Right lobe of liver (tissue), 6 donors: ENCODE measurements at regions of chr5 and their contacts with region 1.

Region 1: DNA sequence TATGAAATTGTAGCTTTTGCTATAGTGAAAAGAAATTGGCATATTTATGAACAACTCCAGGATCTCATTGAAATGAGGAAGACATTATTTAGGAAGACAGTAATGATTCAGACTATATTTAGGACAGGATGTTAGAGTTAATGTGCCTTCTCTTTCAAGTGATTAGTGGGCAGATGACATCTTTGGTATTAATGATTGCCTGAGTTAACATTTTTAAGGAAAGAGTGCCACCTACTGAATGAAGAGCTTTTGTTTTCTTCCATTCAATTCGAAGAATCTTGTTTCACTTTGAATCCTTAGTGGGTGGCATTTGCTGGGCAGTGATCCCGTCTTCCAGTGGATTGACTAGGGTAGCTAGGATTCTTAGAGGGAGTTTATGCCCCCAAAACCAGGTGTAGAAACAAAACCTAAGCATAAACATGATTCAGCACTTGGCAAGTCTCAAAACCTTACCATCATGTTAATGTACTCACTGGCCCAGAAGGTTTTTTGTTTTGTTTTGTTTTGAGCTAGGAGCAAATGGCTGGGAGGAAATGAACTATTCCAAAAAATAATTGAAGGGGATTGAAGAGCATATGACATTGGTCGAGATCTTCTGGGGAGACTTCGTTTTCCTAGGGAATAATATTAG is 23.2 kb downstream of the MAP3K1 start:
- DNase-seq: no peak
- ATAC-seq: peak; percentile 81 to 91 (median 85)
- H3K4me3 ChIP-seq: no peak overlapping the region
- H3K27ac ChIP-seq: peak overlapping the region in 1 of 3 donors; percentile 8
- H3K4me1 ChIP-seq: peaks cover 0 to 8% (median 0%) of the 10 kb centered on the region in 4 donors
- H3K27me3 ChIP-seq: no peaks in the 10 kb centered on the region
- CTCF ChIP-seq: peak; percentile 55 to 63 (median 60)
- POLR2A ChIP-seq: no peak

Region 2: DNA sequence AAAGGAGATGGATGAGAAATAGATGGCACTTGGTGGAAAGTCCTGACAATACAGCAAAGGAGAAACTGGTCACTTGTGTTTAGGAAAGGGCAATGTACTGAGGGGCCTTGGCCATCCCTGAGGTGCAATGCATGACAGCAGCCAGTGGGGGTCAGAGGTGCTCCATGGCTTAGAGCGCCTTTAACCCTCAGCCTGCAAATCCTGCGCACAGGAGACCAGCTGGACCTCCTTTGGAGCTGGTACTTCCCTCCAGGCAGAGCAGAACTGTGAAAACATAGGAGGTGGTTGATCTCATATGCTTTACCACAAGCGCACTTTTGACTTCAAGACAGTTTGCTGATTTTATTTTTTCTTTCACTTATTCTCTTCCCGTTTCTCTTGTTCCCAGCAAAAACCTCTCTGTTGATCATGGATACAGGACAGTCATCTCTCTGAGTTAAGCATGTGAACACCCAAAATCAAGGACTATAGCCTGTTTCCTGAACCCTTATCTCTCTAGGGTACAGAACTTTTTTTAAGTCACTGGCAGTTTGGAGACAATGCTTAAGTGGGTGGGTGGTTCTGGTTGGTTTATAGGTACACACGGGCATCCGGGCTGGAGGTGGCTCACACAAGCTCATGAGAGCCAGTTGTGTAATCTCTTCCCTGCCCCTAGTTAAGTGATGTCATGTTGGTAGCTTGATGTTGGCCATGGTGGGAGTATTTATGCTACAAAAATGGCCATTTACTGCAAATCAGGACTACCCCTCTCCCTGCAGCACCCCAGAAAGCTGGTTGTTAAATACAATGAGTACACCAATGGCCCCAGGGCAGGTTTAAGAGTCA is 567.7 kb before region 1 on chr5:
- intact Hi-C with region 1: loop called (anchors 10 kb)
- DNase-seq: peak; percentile 79 to 82 (median 80)
- ATAC-seq: peak; percentile 99 to 100 (median 100)
- H3K4me3 ChIP-seq: no peak overlapping the region
- H3K27ac ChIP-seq: no peak overlapping the region
- H3K4me1 ChIP-seq: no peaks in the 10 kb centered on the region
- H3K27me3 ChIP-seq: no peaks in the 10 kb centered on the region
- CTCF ChIP-seq: peak; percentile 97 to 99 (median 98)
- POLR2A ChIP-seq: no peak

Region 3: GRCh38 chr5:56893251-56893951 is 54.9 kb after region 1 on chr5:
- intact Hi-C with region 1: no loop called
- DNase-seq: no peak
- ATAC-seq: no peak
- H3K4me3 ChIP-seq: no peak overlapping the region
- H3K27ac ChIP-seq: no peak overlapping the region
- H3K4me1 ChIP-seq: no peaks in the 10 kb centered on the region
- H3K27me3 ChIP-seq: no peaks in the 10 kb centered on the region
- CTCF ChIP-seq: no peak
- POLR2A ChIP-seq: no peak